ENCODE measurements at regions of chr6 and their contacts with region 1.

Region 1: GRCh38 chr6:36885461-36886401 is at the start of gene C6orf89:
- DNase-seq: peak; percentile 98
- H3K4me3 ChIP-seq: peak within 1 kb of the TSS; percentile 99
- H3K27ac ChIP-seq: peak within 1 kb of the TSS; percentile 71
- H3K4me1 ChIP-seq: peaks cover 17% of the 10 kb centered on the region; the same call in 1 of the 2 replicates
- H3K27me3 ChIP-seq: no peaks in the 10 kb centered on the region
- total RNA-seq, gene C6orf89: 84.0 and 85.5 TPM in 2 replicates

Region 2: GRCh38 chr6:37222125-37222967 is 336.6 kb after region 1 on chr6:
- in situ Hi-C with region 1: loop called (anchors 25 kb)
- DNase-seq: peak; percentile 86
- H3K4me3 ChIP-seq: peak overlapping the region; percentile 74
- H3K27ac ChIP-seq: no peak overlapping the region
- H3K4me1 ChIP-seq: peaks cover 4% of the 10 kb centered on the region; the same call in 1 of the 2 replicates
- H3K27me3 ChIP-seq: no peaks in the 10 kb centered on the region

Region 3: DNA sequence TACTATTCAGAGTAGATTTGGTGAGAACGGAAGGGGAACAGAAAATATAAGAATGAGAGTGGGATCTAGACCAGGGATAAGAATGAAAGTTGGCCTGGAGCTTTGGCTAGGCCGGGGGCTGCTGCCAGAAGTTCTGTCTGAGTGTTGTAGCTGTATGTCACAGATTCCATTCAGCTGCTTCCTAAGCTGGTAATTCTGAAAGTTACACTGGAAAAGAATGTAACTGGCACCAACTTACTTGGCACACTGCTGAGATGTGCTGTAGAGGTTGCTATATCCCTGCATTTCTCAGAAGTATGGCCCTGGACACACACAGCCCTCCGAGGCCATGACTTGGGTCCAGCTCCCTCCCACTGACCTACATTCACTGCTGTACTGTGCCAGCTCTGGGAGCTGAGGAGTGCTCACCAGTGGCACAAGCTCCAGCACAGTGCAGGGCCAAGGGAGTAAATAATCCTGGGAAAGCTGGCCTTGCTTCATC is 398.0 kb after region 1 on chr6:
- in situ Hi-C with region 1: no loop called
- DNase-seq: peak; percentile 61
- H3K4me3 ChIP-seq: no peak overlapping the region
- H3K27ac ChIP-seq: peak overlapping the region; percentile 37
- H3K4me1 ChIP-seq: peaks cover 24% of the 10 kb centered on the region
- H3K27me3 ChIP-seq: no peaks in the 10 kb centered on the region